Ovary (tissue), 10 donors: ENCODE measurements at regions of chr19 and their contacts with region 1.

Region 1: DNA sequence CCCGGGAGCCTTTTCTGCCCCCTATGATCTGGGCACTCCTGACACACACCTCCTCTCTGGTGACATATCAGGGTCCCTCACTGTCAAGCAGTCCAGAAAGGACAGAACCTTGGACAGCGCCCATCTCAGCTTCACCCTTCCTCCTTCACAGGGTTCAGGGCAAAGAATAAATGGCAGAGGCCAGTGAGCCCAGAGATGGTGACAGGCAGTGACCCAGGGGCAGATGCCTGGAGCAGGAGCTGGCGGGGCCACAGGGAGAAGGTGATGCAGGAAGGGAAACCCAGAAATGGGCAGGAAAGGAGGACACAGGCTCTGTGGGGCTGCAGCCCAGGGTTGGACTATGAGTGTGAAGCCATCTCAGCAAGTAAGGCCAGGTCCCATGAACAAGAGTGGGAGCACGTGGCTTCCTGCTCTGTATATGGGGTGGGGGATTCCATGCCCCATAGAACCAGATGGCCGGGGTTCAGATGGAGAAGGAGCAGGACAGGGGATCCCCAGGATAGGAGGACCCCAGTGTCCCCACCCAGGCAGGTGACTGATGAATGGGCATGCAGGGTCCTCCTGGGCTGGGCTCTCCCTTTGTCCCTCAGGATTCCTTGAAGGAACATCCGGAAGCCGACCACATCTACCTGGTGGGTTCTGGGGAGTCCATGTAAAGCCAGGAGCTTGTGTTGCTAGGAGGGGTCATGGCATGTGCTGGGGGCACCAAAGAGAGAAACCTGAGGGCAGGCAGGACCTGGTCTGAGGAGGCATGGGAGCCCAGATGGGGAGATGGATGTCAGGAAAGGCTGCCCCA is 8.5 kb upstream of the CEACAM7 start:
- DNase-seq: no peak
- H3K4me3 ChIP-seq: no peak overlapping the region
- H3K27ac ChIP-seq: no peak overlapping the region
- H3K4me1 ChIP-seq: no peaks in the 10 kb centered on the region
- H3K27me3 ChIP-seq: no peaks in the 10 kb centered on the region
- CTCF ChIP-seq: no peak
- EP300 ChIP-seq: no peak
- POLR2A ChIP-seq: no peak

Region 2: GRCh38 chr19:39731685-39732084 is 1964.9 kb before region 1 on chr19:
- intact Hi-C with region 1: loop called in 1 of 4 experiments (anchors 5 kb)
- DNase-seq: no peak
- H3K4me3 ChIP-seq: no peak overlapping the region
- H3K27ac ChIP-seq: no peak overlapping the region
- H3K4me1 ChIP-seq: no peaks in the 10 kb centered on the region
- H3K27me3 ChIP-seq: no peaks in the 10 kb centered on the region
- CTCF ChIP-seq: no peak
- EP300 ChIP-seq: no peak
- POLR2A ChIP-seq: no peak

Region 3: GRCh38 chr19:41606215-41606837 is 90.3 kb before region 1 on chr19:
- intact Hi-C with region 1: no loop called
- DNase-seq: no peak
- H3K4me3 ChIP-seq: no peak overlapping the region
- H3K27ac ChIP-seq: no peak overlapping the region
- H3K4me1 ChIP-seq: no peaks in the 10 kb centered on the region
- H3K27me3 ChIP-seq: no peaks in the 10 kb centered on the region
- CTCF ChIP-seq: no peak
- EP300 ChIP-seq: no peak
- POLR2A ChIP-seq: no peak

Region 4: GRCh38 chr19:41753936-41754529 is 57.4 kb after region 1 on chr19:
- intact Hi-C with region 1: no loop called
- DNase-seq: peak in 1 of 5 donors; percentile 21
- H3K4me3 ChIP-seq: no peak overlapping the region
- H3K27ac ChIP-seq: no peak overlapping the region
- H3K4me1 ChIP-seq: no peaks in the 10 kb centered on the region
- H3K27me3 ChIP-seq: no peaks in the 10 kb centered on the region
- CTCF ChIP-seq: no peak
- EP300 ChIP-seq: no peak
- POLR2A ChIP-seq: no peak

Region 5: GRCh38 chr19:41811036-41811435 is 114.4 kb after region 1 on chr19:
- intact Hi-C with region 1: no loop called
- DNase-seq: no peak
- H3K4me3 ChIP-seq: no peak overlapping the region
- H3K27ac ChIP-seq: no peak overlapping the region
- H3K4me1 ChIP-seq: no peaks in the 10 kb centered on the region
- H3K27me3 ChIP-seq: no peaks in the 10 kb centered on the region
- CTCF ChIP-seq: no peak
- EP300 ChIP-seq: no peak
- POLR2A ChIP-seq: no peak